ENCODE measurements at regions of chr1 and their contacts with region 1.

Region 1: DNA sequence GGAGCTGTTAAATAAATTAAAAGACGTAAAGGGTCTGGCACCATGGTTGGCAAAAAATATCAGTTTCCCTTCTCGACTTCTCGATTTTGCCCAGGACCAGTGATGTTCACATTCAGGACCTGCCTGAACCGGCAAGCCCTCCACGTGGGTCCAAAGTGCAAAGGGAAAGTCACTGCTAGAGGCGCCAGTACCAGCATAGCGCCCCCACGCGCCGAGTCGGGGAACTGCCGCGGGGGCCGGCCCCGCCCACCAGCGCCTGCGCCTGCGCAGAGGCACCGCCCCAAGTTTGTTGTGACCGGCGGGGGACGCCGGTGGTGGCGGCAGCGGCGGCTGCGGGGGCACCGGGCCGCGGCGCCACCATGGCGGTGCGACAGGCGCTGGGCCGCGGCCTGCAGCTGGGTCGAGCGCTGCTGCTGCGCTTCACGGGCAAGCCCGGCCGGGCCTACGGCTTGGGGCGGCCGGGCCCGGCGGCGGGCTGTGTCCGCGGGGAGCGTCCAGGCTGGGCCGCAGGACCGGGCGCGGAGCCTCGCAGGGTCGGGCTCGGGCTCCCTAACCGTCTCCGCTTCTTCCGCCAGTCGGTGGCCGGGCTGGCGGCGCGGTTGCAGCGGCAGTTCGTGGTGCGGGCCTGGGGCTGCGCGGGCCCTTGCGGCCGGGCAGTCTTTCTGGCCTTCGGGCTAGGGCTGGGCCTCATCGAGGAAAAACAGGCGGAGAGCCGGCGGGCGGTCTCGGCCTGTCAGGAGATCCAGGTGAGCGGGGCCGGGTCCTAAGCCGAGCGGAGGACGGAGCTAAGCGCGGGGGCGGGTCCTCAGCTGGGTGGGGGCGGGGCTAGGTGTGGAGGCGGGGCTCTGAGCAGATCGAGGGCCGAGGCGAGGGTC is at the start of gene PINK1:
- DNase-seq: peak; percentile 71
- H3K4me3 Mint-ChIP-seq: peak within 1 kb of the TSS; percentile 77
- H3K27ac Mint-ChIP-seq: peak within 1 kb of the TSS; percentile 69
- H3K4me1 Mint-ChIP-seq: peaks cover 12% of the 10 kb centered on the region
- H3K27me3 Mint-ChIP-seq: no peaks in the 10 kb centered on the region
- CTCF ChIP-seq: peak; percentile 99
- total RNA-seq, gene PINK1: 20.9 and 26.1 TPM in 2 replicates

Region 2: GRCh38 chr1:20212685-20213331 is 420.6 kb before region 1 on chr1:
- CTCF ChIA-PET with region 1: interaction called, 4 read pairs
- POLR2A ChIA-PET with region 1: interaction called, 5 read pairs
- intact Hi-C with region 1: loop called (anchors 10 kb)
- DNase-seq: peak; percentile 87
- H3K4me3 Mint-ChIP-seq: no peak overlapping the region
- H3K27ac Mint-ChIP-seq: no peak overlapping the region
- H3K4me1 Mint-ChIP-seq: peaks cover 27% of the 10 kb centered on the region
- H3K27me3 Mint-ChIP-seq: no peaks in the 10 kb centered on the region
- CTCF ChIP-seq: peak; percentile 81

Region 3: DNA sequence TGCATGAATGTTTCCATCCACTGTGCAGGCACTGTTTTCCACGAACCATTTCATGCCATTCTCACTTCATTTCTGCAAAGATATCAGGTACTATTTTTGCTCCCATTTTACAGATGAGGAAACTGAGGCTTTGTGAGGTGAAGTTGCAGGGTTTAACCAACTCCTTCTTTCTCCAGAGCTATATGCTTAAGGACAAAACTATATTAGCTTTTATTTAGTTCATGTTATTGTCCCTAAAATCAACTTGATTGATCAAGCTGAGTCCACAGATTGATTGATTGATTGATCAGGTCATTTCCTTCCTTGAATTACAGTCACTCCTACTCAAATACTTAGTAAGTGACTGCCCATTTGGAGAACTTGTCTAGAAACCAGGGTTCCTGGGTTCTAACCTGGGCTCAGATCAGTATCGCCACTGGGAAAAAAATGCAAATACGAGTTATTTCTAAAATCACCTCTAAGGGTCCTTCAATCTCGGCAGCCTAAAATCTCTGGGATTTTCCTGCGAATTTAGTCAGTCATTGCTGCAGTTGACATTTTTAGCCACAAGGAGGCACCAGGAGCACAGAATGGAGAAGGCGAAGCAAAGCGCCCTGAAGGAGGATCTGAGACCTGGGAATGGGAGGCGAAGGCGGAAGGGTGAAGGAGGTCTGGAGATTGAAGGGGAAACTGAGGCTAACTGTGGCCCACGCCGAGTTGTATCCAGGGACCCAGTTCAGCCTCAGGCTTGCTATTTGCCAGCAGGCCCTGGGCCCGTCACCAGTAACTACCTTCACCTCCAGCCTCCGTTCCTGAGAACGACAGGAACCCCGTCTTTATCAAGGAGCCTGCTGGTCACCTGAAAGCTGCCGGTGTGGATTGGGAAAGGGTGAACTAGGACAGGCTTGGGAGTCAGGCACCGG is 111.2 kb before region 1 on chr1:
- CTCF ChIA-PET with region 1: interaction called, 61 read pairs
- POLR2A ChIA-PET with region 1: interaction called, 6 read pairs
- intact Hi-C with region 1: loop called (anchors 1 kb)
- DNase-seq: peak; percentile 83
- H3K4me3 Mint-ChIP-seq: peak overlapping the region; percentile 36
- H3K27ac Mint-ChIP-seq: no peak overlapping the region
- H3K4me1 Mint-ChIP-seq: no peaks in the 10 kb centered on the region
- H3K27me3 Mint-ChIP-seq: no peaks in the 10 kb centered on the region
- CTCF ChIP-seq: peak; percentile 83

Region 4: GRCh38 chr1:20603527-20604464 is 29.6 kb before region 1 on chr1:
- CTCF ChIA-PET with region 1: interaction called, 3 read pairs
- POLR2A ChIA-PET with region 1: interaction called, 10 read pairs
- intact Hi-C with region 1: no loop called
- DNase-seq: peak; percentile 85
- H3K4me3 Mint-ChIP-seq: no peak overlapping the region
- H3K27ac Mint-ChIP-seq: peak overlapping the region; percentile 68
- H3K4me1 Mint-ChIP-seq: peaks cover 44% of the 10 kb centered on the region
- H3K27me3 Mint-ChIP-seq: no peaks in the 10 kb centered on the region
- CTCF ChIP-seq: no peak

Region 5: GRCh38 chr1:20661207-20662109 is 28.0 kb after region 1 on chr1 and contains the start of gene DDOST:
- CTCF ChIA-PET with region 1: interaction called, 4 read pairs
- POLR2A ChIA-PET with region 1: interaction called, 21 read pairs
- intact Hi-C with region 1: no loop called
- DNase-seq: peak; percentile 98
- H3K4me3 Mint-ChIP-seq: peak within 1 kb of the TSS; percentile 96
- H3K27ac Mint-ChIP-seq: peak within 1 kb of the TSS; percentile 69
- H3K4me1 Mint-ChIP-seq: peaks cover 26% of the 10 kb centered on the region
- H3K27me3 Mint-ChIP-seq: no peaks in the 10 kb centered on the region
- CTCF ChIP-seq: no peak
- total RNA-seq, gene DDOST: 292 and 397 TPM in 2 replicates

Measured in MCF 10A (cell line).